ENCODE measurements at regions of chr2 and their contacts with region 1.

Region 1: DNA sequence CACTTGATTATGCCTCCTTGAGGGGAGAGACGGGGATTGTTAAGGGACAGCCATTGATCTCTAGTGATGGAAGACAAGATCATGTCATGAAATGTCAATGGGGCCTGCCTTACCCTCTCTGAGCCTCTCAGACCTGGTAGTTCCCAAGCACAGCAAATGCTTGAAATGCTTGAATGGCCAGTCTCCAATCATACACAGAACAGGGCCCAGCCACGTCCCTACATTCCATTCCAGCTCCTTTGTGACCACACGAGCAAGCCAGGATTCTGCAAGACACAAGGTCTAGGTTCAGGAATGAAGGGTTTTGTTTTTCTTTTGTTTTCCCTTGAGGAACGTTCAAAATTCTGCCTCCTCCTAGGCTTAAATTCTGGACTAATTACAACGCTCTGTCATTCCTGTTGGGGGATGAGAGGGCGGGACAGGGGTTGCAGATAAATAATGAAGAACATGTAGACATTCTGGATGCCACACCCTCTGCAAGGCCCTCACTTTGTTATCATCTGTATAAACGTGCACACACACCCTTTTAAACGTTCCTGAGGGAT is 98.1 kb upstream of the YPEL5 start:
- DNase-seq: no peak
- H3K4me3 ChIP-seq: no peak overlapping the region
- H3K27ac ChIP-seq: no peak overlapping the region
- H3K4me1 ChIP-seq: no peaks in the 10 kb centered on the region
- H3K27me3 ChIP-seq: no peaks in the 10 kb centered on the region
- CTCF ChIP-seq: no peak
- POLR2A ChIP-seq: no peak

Region 2: GRCh38 chr2:28745876-28746275 is 1302.8 kb before region 1 on chr2:
- intact Hi-C with region 1: no loop called
- DNase-seq: no peak
- H3K4me3 ChIP-seq: no peak overlapping the region
- H3K27ac ChIP-seq: peak overlapping the region in 1 of 2 donors; percentile 100
- H3K4me1 ChIP-seq: peaks cover 0 to 3% of the 10 kb centered on the region in 2 donors
- H3K27me3 ChIP-seq: no peaks in the 10 kb centered on the region
- CTCF ChIP-seq: no peak
- POLR2A ChIP-seq: no peak

Region 3: DNA sequence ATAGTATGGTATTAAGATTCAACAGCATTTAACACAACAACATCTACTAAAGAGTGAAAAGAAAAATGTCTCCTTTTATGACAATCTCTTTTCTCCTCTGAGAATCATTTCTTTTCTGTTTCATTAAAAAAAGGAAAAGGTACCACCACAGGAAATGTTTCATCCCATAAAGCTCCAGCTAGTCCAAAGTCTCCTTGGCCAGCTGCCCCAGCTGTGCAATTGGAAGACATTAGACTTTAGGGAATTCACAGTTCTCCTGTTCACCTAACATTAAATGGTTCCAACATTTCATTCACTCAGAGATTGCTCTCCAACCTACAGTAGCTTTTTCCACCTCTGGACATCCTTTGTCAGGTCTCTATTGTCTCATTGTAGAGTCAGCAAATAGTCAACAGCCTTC is 19.4 kb after region 1 on chr2:
- intact Hi-C with region 1: loop called (anchors 1 kb)
- DNase-seq: no peak
- H3K4me3 ChIP-seq: no peak overlapping the region
- H3K27ac ChIP-seq: no peak overlapping the region
- H3K4me1 ChIP-seq: no peaks in the 10 kb centered on the region
- H3K27me3 ChIP-seq: no peaks in the 10 kb centered on the region
- CTCF ChIP-seq: no peak
- POLR2A ChIP-seq: no peak